ENCODE measurements at regions of chr3 and their contacts with region 1.

Region 1: DNA sequence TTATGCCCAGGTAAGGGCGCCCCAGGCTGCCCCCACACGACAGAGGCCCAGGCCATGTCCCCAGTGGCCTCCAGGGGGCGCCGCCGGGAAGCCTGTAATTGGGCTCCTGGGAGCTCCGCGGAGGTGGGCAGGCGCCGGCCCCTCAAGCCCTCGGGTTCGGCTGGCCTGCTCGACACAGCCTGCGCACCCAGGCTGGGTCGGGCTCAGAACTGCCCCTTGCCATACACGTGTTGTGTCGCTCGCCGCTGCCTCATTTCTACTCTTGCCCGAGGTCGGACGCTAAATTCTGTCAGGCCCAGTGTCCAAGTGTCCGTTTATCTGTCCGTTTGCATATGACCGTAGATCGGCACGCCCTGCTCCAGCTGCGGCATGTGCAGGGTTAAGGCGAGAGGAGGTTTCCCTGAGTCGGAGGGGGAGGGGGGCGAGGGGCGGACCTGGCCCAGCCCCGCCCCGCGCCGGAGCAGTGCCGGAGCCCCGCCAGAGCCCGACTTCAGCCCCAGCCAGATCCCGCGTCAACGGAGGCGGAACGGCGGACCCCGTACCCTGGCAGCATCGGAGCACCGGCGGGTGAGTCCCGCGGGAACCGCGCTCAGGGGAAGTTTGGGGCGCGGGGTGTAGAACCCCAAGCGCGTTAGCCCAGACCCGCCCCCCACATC is at the start of gene KLHDC8B:
- DNase-seq: peak; percentile 75 to 87 (median 79)
- H3K4me3 ChIP-seq: peak within 1 kb of the TSS; percentile 68
- H3K4me3 Mint-ChIP-seq: peak within 1 kb of the TSS; percentile 84 to 94 (median 87)
- H3K27ac ChIP-seq: peak within 1 kb of the TSS; percentile 58
- H3K27ac Mint-ChIP-seq: peak within 1 kb of the TSS in 7 of 8 donors; percentile 3 to 92 (median 84)
- H3K4me1 ChIP-seq: peaks cover 28% of the 10 kb centered on the region
- H3K4me1 Mint-ChIP-seq: peaks cover 15 to 25% (median 15%) of the 10 kb centered on the region in 3 donors
- H3K27me3 ChIP-seq: no peaks in the 10 kb centered on the region
- H3K27me3 Mint-ChIP-seq: peaks cover 0 to 5% of the 10 kb centered on the region in 2 donors
- total RNA-seq, gene KLHDC8B: 3.5 to 4.1 TPM

Region 2: GRCh38 chr3:49158108-49158709 is 13.0 kb before region 1 on chr3:
- CTCF ChIA-PET with region 1: interaction called, 21 read pairs
- POLR2A ChIA-PET with region 1: no interaction called
- DNase-seq: peak; percentile 36 to 78 (median 49)
- H3K4me3 ChIP-seq: no peak overlapping the region
- H3K4me3 Mint-ChIP-seq: peak overlapping the region in 1 of 7 donors; percentile 2
- H3K27ac ChIP-seq: no peak overlapping the region
- H3K27ac Mint-ChIP-seq: peak overlapping the region in 6 of 8 donors; percentile 2 to 98 (median 40)
- H3K4me1 ChIP-seq: no peaks in the 10 kb centered on the region
- H3K4me1 Mint-ChIP-seq: peaks cover 0 to 12% (median 4%) of the 10 kb centered on the region in 3 donors
- H3K27me3 ChIP-seq: no peaks in the 10 kb centered on the region
- H3K27me3 Mint-ChIP-seq: no peaks in the 10 kb centered on the region

Region 3: DNA sequence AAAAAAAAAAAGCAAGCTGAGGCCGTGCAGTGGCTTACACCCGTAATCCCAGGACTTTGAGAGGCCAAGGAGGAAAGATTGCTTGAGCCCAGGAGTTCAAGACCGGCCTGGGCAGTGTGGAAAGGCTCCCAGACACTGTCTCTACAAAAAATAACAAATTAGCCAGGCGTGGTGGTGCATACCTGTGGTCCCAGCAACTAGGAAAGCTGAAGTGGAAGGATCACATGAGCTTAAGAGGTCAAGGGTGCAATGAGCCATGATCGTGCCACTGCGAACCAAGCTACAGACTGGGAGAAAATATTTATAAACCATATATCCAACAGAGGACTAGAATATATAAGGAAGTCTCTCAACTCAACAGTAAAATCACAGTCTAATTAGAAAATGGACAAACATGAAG is 10.1 kb after region 1 on chr3:
- CTCF ChIA-PET with region 1: interaction called, 17 read pairs
- POLR2A ChIA-PET with region 1: no interaction called
- DNase-seq: no peak
- H3K4me3 ChIP-seq: no peak overlapping the region
- H3K4me3 Mint-ChIP-seq: no peak overlapping the region
- H3K27ac ChIP-seq: no peak overlapping the region
- H3K27ac Mint-ChIP-seq: no peak overlapping the region
- H3K4me1 ChIP-seq: no peaks in the 10 kb centered on the region
- H3K4me1 Mint-ChIP-seq: no peaks in the 10 kb centered on the region
- H3K27me3 ChIP-seq: no peaks in the 10 kb centered on the region
- H3K27me3 Mint-ChIP-seq: peaks cover 3 to 17% of the 10 kb centered on the region in 2 donors

Region 4: DNA sequence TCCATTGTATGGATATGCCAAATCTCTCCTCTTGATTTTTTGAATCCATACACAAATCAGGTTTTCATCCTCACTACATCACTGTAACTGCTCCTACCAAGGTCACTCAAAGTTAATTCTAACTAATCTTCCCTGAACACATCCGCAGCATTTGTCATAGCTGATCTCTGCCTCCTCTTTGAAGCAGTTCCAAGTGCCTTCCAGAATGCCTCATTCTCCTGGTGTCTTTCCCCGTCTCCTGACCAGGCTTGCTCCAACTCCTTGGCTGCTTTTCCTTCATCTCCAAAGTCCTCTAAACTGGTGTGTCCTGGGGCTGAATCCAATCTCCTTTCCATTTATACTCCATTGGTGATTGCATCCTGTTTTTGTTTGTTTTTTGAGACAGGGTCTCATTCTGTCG is 26.9 kb after region 1 on chr3:
- CTCF ChIA-PET with region 1: no interaction called
- POLR2A ChIA-PET with region 1: no interaction called
- DNase-seq: no peak
- H3K4me3 ChIP-seq: no peak overlapping the region
- H3K4me3 Mint-ChIP-seq: no peak overlapping the region
- H3K27ac ChIP-seq: no peak overlapping the region
- H3K27ac Mint-ChIP-seq: no peak overlapping the region
- H3K4me1 ChIP-seq: no peaks in the 10 kb centered on the region
- H3K4me1 Mint-ChIP-seq: no peaks in the 10 kb centered on the region
- H3K27me3 ChIP-seq: no peaks in the 10 kb centered on the region
- H3K27me3 Mint-ChIP-seq: peaks cover 11 to 22% of the 10 kb centered on the region in 2 donors

Region 5: GRCh38 chr3:49454458-49454857 is 283.2 kb after region 1 on chr3:
- CTCF ChIA-PET with region 1: interaction called, 26 read pairs
- POLR2A ChIA-PET with region 1: interaction called, 3 read pairs
- DNase-seq: no peak
- H3K4me3 ChIP-seq: no peak overlapping the region
- H3K4me3 Mint-ChIP-seq: no peak overlapping the region
- H3K27ac ChIP-seq: no peak overlapping the region
- H3K27ac Mint-ChIP-seq: peak overlapping the region in 3 of 8 donors; percentile 2 to 79 (median 61)
- H3K4me1 ChIP-seq: no peaks in the 10 kb centered on the region
- H3K4me1 Mint-ChIP-seq: no peaks in the 10 kb centered on the region
- H3K27me3 ChIP-seq: no peaks in the 10 kb centered on the region
- H3K27me3 Mint-ChIP-seq: no peaks in the 10 kb centered on the region

Region 6: DNA sequence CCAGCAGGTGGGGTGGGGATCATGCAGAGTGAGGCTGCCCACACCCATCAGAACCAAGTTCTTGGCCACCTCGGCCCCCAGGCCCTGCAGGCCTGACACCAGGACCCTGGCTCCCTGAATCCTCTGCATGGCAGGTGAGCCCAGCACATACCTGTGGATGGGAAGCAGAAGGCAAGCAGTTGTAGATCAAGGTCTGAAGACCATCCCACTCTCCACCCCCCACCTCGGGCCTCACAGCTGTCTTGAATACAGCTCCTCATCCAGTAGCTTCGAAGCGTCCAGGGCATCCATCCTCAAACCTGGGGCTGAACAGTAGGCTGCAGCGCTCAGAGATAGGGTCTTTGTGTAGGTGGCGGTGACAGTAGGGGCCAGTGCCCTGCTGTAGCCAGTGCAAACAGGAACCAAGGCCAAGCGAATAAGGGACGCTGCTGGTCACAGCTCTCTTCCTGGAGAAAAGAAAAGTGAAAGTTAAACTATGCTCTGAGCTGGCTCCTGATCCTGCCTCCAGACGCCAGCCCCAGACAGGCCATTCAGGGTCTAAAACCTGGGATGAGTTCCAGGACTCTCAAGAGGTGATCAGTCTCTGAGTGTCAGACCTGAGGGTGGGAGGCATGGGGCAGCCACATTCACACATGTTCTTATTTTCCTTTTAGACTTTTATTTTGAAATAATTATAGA is 642.4 kb after region 1 on chr3 and contains the start of gene UBA7:
- CTCF ChIA-PET with region 1: no interaction called
- POLR2A ChIA-PET with region 1: no interaction called
- DNase-seq: peak in 4 of 5 donors; percentile 29 to 62 (median 44)
- H3K4me3 ChIP-seq: peak within 1 kb of the TSS; percentile 75
- H3K4me3 Mint-ChIP-seq: peak within 1 kb of the TSS; percentile 96 to 98 (median 98)
- H3K27ac ChIP-seq: peak within 1 kb of the TSS; percentile 63
- H3K27ac Mint-ChIP-seq: peak within 1 kb of the TSS; percentile 94 to 99 (median 99)
- H3K4me1 ChIP-seq: peaks cover 30% of the 10 kb centered on the region
- H3K4me1 Mint-ChIP-seq: peaks cover 26 to 47% (median 36%) of the 10 kb centered on the region in 3 donors
- H3K27me3 ChIP-seq: no peaks in the 10 kb centered on the region
- H3K27me3 Mint-ChIP-seq: no peaks in the 10 kb centered on the region
- total RNA-seq, gene UBA7: 57.8 to 58.3 TPM

Measured in CD8-positive, alpha-beta memory T cell (primary cell).